ENCODE measurements at regions of chr22 and their contacts with region 1.

Region 1: GRCh38 chr22:38793721-38794466 is at the start of gene DNAL4:
- DNase-seq: peak; percentile 95 to 99
- H3K4me3 ChIP-seq: peak within 1 kb of the TSS; percentile 64 to 68
- H3K27ac ChIP-seq: peak within 1 kb of the TSS; percentile 81 to 85
- H3K4me1 ChIP-seq: peaks cover 0 to 2% of the 10 kb centered on the region in 2 donors
- H3K27me3 ChIP-seq: no peaks in the 10 kb centered on the region
- CTCF ChIP-seq: no peak
- POLR2A ChIP-seq: peak; percentile 26 to 65
- total RNA-seq, gene DNAL4: 3.1 to 23.4 (median 8.3) TPM

Region 2: GRCh38 chr22:38638734-38639133 is 155.2 kb before region 1 on chr22:
- intact Hi-C with region 1: no loop called
- DNase-seq: no peak
- H3K4me3 ChIP-seq: no peak overlapping the region
- H3K27ac ChIP-seq: no peak overlapping the region
- H3K4me1 ChIP-seq: no peaks in the 10 kb centered on the region
- H3K27me3 ChIP-seq: no peaks in the 10 kb centered on the region
- CTCF ChIP-seq: no peak
- POLR2A ChIP-seq: no peak

Region 3: DNA sequence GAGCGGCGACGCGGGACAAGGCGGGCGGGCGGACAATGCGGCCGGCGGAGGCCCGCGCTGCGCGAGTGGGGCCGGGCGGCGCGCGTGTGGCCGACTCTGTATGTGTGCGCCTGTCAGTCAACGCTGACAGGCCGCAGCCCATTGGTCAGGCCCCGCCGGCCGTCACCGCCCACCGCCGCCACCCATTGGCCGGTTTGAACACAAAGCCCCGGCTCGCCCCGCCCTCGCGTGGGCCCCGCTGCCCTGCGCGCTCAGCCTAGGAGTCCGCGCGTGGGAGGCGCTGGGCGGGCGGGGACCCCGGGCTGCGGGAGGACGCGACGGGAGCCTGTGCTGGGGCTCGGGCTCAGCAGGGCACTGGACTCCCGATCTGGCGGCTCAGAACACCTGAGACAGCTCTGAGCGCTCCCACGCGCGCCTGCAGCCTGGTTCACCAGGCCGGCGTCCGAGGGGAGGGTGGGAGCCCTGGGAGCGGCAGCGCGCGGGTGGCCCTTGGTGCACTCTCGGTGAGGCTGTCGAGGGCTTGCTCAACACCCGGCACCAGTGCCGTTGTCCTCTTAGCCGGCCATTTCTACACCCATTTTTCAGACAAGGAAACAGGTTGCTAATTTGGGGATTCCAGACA is 37.9 kb before region 1 on chr22 and contains the start of gene SUN2:
- intact Hi-C with region 1: loop called (anchors 5 kb)
- DNase-seq: peak; percentile 93 to 94
- H3K4me3 ChIP-seq: peak within 1 kb of the TSS; percentile 41 to 75
- H3K27ac ChIP-seq: peak within 1 kb of the TSS; percentile 90 to 92
- H3K4me1 ChIP-seq: peaks cover 3 to 10% of the 10 kb centered on the region in 2 donors
- H3K27me3 ChIP-seq: no peaks in the 10 kb centered on the region
- CTCF ChIP-seq: peak in 1 of 4 experiments; percentile 28
- POLR2A ChIP-seq: peak; percentile 66 to 86
- total RNA-seq, gene SUN2: 118 to 285 (median 175) TPM

Measured in uterus (tissue), 4 donors.